ENCODE measurements at regions of chr6 and their contacts with region 1.

Region 1: GRCh38 chr6:87832025-87832825 is 130.2 kb upstream of the AKIRIN2 start:
- DNase-seq: peak; percentile 28
- H3K4me3 ChIP-seq: peak overlapping the region; percentile 46 to 51
- H3K27ac ChIP-seq: no peak overlapping the region
- H3K4me1 ChIP-seq: no peaks in the 10 kb centered on the region
- H3K27me3 ChIP-seq: no peaks in the 10 kb centered on the region
- CTCF ChIP-seq: peak; percentile 65
- EP300 ChIP-seq: no peak
- RAD21 ChIP-seq: peak; percentile 61

Region 2: GRCh38 chr6:87817183-87817582 is 15.0 kb before region 1 on chr6:
- CTCF ChIA-PET with region 1: interaction called, 16 read pairs
- POLR2A ChIA-PET with region 1: no interaction called
- DNase-seq: no peak
- H3K4me3 ChIP-seq: no peak overlapping the region
- H3K27ac ChIP-seq: no peak overlapping the region
- H3K4me1 ChIP-seq: no peaks in the 10 kb centered on the region
- H3K27me3 ChIP-seq: no peaks in the 10 kb centered on the region; the same call in 1 of the 2 replicates
- CTCF ChIP-seq: no peak
- EP300 ChIP-seq: no peak
- RAD21 ChIP-seq: no peak

Measured in SK-N-SH (cell line).